ENCODE measurements at regions of chrX and their contacts with region 1.

Region 1: GRCh38 chrX:31036895-31037294 is 34.9 kb downstream of the FTHL17 start:
- DNase-seq: peak; percentile 45
- H3K4me3 Mint-ChIP-seq: no peak overlapping the region
- H3K27ac Mint-ChIP-seq: no peak overlapping the region
- H3K4me1 Mint-ChIP-seq: peaks cover 6% of the 10 kb centered on the region
- H3K27me3 Mint-ChIP-seq: no peaks in the 10 kb centered on the region
- CTCF ChIP-seq: peak; percentile 39

Region 2: GRCh38 chrX:30931925-30932324 is 105.0 kb before region 1 on chrX:
- CTCF ChIA-PET with region 1: interaction called, 6 read pairs
- intact Hi-C with region 1: loop called (anchors 5 kb)
- DNase-seq: no peak
- H3K4me3 Mint-ChIP-seq: no peak overlapping the region
- H3K27ac Mint-ChIP-seq: peak overlapping the region; percentile 33
- H3K4me1 Mint-ChIP-seq: peaks cover 18% of the 10 kb centered on the region
- H3K27me3 Mint-ChIP-seq: no peaks in the 10 kb centered on the region
- CTCF ChIP-seq: no peak

Region 3: DNA sequence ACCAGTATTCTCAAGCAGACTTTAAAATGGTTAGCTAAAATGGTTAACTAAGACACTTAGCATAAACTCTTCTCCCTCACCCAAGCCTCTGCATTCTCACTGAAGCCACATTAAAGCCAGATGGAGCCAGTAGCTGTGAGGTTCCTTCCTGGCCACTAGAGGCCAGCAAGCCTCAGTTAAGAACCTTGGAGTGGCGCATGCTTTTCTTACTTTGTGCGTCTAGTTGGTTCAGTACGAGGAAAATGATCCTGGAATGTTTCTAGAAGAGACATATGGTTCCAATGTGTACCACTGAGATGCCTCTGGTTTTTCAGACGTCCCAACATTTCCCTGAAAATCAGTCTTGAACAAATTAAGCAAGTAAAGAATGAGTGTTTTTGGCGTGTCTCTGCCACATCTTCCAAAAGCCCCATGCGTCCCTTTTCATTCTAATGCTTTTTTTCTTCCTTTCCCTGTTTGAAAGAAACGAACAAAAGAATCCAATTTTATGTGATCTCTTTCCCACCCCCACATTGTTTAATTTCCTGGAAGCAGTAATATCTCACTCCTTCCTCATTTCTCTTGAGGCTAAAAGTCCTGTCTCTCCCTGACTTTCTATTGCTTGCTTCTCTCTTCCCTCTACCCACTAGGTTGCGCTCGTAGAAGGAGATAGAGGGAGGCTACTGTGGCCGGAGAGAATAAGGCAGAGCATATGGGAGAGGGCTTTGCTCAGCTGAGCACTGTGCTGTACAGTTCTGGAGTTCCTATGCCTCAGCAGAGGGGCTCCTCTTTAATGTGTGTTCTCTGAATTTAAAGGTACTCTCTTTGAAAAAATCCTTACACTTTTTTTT is 64.9 kb before region 1 on chrX:
- CTCF ChIA-PET with region 1: interaction called, 3 read pairs
- intact Hi-C with region 1: loop called (anchors 5 kb)
- DNase-seq: peak; percentile 36
- H3K4me3 Mint-ChIP-seq: peak overlapping the region; percentile 73
- H3K27ac Mint-ChIP-seq: peak overlapping the region; percentile 84
- H3K4me1 Mint-ChIP-seq: peaks cover 8% of the 10 kb centered on the region
- H3K27me3 Mint-ChIP-seq: no peaks in the 10 kb centered on the region
- CTCF ChIP-seq: peak; percentile 51

Region 4: GRCh38 chrX:30992381-30992904 is 44.5 kb before region 1 on chrX:
- CTCF ChIA-PET with region 1: no interaction called
- intact Hi-C with region 1: loop called (anchors 1 kb)
- DNase-seq: no peak
- H3K4me3 Mint-ChIP-seq: no peak overlapping the region
- H3K27ac Mint-ChIP-seq: no peak overlapping the region
- H3K4me1 Mint-ChIP-seq: peaks cover 11% of the 10 kb centered on the region
- H3K27me3 Mint-ChIP-seq: no peaks in the 10 kb centered on the region
- CTCF ChIP-seq: no peak

Region 5: GRCh38 chrX:31213941-31214340 is 177.0 kb after region 1 on chrX:
- CTCF ChIA-PET with region 1: no interaction called
- intact Hi-C with region 1: loop called (anchors 10 kb)
- DNase-seq: peak; percentile 36
- H3K4me3 Mint-ChIP-seq: no peak overlapping the region
- H3K27ac Mint-ChIP-seq: no peak overlapping the region
- H3K4me1 Mint-ChIP-seq: no peaks in the 10 kb centered on the region
- H3K27me3 Mint-ChIP-seq: no peaks in the 10 kb centered on the region
- CTCF ChIP-seq: no peak

Region 6: DNA sequence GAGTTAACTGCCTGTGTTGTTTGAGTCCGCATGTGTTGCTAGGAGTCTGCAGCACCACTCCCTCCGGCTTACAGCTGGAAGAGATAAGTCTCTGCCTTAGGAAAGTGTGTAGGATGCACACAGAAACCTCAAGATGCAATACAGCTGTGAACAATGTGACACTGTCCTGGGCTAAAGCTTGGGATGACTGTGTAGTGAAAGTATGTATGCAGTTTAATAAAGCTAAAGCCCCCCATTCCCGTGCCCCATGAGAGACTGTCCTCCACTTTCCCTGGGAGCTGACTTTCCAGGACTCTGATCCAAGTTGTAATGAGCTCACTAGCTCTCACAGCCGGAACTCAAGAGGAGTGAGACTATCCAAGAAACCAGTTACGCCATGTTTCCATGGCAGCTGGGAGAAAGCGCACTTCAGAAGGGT is 191.5 kb after region 1 on chrX:
- CTCF ChIA-PET with region 1: no interaction called
- intact Hi-C with region 1: no loop called
- DNase-seq: no peak
- H3K4me3 Mint-ChIP-seq: no peak overlapping the region
- H3K27ac Mint-ChIP-seq: no peak overlapping the region
- H3K4me1 Mint-ChIP-seq: no peaks in the 10 kb centered on the region
- H3K27me3 Mint-ChIP-seq: no peaks in the 10 kb centered on the region
- CTCF ChIP-seq: no peak

Region 7: DNA sequence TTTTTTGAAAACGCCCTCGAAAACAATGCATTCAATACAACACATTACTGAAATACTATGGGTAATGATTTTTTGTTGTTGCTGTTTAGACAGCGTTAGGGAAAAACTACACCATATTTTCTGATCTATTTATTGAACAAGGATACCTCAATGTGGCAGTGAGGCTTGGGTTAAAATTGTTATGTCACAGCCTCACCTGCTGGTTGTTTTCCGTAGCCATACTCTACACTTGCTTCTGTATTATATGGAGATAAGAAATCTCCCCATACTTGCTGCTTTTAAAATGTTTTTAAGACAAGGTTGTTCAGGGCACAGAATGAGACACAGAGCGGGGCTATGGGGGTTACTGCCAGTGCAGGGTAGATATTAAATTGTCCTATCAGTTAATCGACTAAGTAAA is 256.5 kb after region 1 on chrX:
- CTCF ChIA-PET with region 1: interaction called, 3 read pairs
- intact Hi-C with region 1: loop called (anchors 1 kb)
- DNase-seq: peak; percentile 4
- H3K4me3 Mint-ChIP-seq: no peak overlapping the region
- H3K27ac Mint-ChIP-seq: no peak overlapping the region
- H3K4me1 Mint-ChIP-seq: no peaks in the 10 kb centered on the region
- H3K27me3 Mint-ChIP-seq: no peaks in the 10 kb centered on the region
- CTCF ChIP-seq: no peak

Region 8: GRCh38 chrX:31658360-31658759 is 621.5 kb after region 1 on chrX:
- CTCF ChIA-PET with region 1: interaction called, 3 read pairs
- intact Hi-C with region 1: loop called (anchors 1 kb)
- DNase-seq: no peak
- H3K4me3 Mint-ChIP-seq: no peak overlapping the region
- H3K27ac Mint-ChIP-seq: no peak overlapping the region
- H3K4me1 Mint-ChIP-seq: peaks cover 7% of the 10 kb centered on the region
- H3K27me3 Mint-ChIP-seq: no peaks in the 10 kb centered on the region
- CTCF ChIP-seq: peak; percentile 17

Measured in Calu3 (cell line).